ENCODE measurements at regions of chr1 and their contacts with region 1.

Region 1: DNA sequence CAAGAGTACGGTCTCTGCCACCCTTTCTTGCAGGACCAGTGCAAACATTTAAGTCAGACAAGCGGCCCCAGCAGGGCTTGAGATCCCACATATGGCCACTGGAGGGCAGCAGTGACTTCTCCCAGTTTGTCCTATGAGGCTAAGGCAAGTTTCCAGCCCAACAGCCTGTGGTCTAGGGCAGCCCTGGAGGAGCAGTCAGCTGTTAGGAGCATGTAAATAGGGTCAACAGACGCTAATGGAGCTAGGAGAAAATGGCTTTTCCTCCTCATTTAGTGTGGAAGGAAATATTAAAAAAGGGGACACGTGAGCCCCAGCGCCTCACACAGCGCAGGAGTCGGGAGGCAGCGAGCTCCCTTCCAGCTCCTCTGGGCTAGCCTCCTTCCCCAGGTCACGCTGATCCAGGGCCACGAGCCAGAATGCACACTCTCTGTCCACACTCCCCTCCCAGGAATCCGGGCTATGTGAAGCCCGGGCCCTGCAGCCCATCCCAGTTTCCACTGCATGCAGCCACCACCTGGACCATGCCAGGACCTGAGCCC is 95.6 kb downstream of the LAMC2 start:
- DNase-seq: peak; percentile 94

Region 2: GRCh38 chr1:182781841-182782586 is 499.6 kb before region 1 on chr1:
- intact Hi-C with region 1: no loop called
- DNase-seq: peak; percentile 83

Region 3: GRCh38 chr1:182962554-182963115 is 319.0 kb before region 1 on chr1:
- intact Hi-C with region 1: loop called (anchors 2 kb)
- DNase-seq: peak; percentile 83

Region 4: DNA sequence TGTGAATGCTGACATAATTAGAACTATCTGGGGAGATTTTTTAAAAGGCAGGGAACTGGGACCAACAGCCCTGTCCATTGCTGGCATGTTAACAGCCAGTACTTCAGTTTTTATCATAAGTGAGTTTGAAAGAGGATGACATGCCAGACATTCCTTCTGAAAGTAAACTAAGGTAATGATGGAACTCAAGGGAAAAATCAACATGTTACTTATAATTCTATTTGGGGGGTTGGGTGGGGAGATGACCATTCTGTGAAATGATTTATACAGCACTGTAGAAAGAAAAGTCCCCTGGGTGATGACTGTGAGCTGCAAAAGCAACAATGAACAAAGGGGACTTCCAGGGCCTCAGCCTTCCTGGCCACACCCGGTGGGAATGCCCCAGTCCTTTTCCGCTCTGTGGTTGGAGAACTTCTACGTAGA is 101.0 kb before region 1 on chr1:
- intact Hi-C with region 1: loop called (anchors 5 kb)
- DNase-seq: peak; percentile 80

Region 5: DNA sequence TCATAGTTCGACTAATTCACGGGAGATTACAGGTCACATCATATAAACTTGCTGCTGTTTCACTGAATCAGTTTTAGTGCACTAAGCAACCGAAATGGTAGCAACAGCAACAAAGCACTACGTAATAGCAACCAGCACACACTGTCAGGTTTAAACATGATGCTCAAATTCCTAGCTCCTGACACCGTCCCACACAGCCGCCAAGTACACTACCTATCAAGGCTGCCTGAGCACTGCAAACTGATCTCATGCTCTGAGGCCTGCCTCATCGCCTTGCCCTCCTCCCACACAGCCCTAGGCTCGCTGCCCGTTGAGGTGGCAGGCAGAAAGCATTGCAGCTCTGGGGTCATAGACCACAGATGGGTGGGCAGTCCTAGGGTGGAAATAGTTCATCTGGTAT is 83.2 kb before region 1 on chr1:
- intact Hi-C with region 1: no loop called
- DNase-seq: no peak

Region 6: DNA sequence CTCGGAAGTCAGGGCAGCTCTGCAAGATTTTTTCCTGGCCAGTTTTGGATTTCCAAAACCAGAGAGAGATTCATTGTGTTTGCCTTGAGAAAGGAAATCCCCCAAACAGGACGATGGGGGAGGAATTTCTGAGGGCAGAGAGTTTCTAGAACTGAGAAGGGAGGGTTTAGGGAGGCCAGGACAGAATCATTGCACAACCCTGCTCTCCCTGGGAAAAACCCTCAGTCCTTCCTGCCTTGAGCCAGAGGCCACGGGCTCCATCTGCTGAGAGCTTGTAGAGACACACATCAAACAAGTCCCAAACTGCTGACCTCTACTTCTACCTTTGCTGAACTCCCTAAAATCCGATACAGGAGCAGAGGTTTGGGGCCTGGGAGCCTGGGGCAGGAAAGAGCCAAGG is 36.8 kb after region 1 on chr1:
- intact Hi-C with region 1: loop called (anchors 1 kb)
- DNase-seq: peak; percentile 84

Region 7: DNA sequence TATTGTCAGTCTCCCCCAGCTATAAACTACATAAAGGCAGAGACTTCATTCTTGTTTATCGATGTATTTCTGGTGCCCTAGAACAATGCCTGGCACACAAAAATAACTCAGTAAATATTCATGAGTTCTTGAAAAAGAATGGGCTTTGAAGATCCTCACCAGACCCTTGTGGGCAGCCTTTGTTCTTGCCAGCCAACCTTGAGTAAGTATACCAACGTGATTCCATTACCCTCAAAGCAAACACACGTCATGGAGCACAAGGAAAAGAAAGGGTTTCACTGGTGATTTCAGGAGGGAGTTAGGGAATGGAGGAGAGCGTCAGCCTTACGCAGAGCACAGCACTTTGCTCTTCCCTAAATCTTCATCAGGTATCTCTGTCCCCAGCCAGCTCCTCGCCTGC is 107.1 kb after region 1 on chr1:
- intact Hi-C with region 1: no loop called
- DNase-seq: no peak

Region 8: DNA sequence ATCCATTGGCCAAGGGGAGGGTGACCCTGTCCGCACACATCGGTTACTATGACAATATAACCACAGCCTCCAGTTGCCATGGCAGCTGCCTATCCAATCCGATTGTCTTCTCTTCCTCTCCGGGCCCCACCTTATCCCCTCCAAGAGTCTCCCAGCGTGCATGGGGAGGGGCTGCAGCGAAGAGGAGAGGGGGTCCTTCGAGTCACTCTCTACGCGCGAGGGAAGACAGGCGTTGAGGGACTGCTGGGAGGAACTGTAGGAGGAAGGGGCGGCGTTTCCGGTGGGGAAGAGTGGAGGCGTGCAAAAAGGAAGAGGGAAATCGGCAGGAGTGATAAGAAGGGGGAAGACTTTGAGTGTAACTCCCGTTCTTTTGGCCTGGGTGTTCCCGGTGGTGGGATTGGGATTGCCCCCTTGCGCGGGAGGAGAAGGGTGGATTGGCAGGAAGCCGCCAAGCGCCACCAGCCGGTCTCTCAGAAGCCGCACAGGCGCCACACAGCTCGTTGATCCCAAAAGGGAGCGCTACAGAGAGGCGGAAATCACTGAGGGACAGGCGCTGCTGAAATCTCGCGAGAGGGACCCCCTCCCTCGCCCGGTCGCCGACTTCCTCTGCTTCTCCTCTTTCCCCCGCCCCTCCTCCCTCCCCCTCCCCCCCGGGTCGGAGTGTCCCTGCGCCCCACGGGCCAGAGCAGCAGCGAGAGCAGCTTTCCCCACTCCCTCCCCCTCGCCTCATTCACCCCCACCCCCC is 190.3 kb after region 1 on chr1:
- intact Hi-C with region 1: loop called (anchors 2 kb)
- DNase-seq: peak; percentile 98

Region 9: DNA sequence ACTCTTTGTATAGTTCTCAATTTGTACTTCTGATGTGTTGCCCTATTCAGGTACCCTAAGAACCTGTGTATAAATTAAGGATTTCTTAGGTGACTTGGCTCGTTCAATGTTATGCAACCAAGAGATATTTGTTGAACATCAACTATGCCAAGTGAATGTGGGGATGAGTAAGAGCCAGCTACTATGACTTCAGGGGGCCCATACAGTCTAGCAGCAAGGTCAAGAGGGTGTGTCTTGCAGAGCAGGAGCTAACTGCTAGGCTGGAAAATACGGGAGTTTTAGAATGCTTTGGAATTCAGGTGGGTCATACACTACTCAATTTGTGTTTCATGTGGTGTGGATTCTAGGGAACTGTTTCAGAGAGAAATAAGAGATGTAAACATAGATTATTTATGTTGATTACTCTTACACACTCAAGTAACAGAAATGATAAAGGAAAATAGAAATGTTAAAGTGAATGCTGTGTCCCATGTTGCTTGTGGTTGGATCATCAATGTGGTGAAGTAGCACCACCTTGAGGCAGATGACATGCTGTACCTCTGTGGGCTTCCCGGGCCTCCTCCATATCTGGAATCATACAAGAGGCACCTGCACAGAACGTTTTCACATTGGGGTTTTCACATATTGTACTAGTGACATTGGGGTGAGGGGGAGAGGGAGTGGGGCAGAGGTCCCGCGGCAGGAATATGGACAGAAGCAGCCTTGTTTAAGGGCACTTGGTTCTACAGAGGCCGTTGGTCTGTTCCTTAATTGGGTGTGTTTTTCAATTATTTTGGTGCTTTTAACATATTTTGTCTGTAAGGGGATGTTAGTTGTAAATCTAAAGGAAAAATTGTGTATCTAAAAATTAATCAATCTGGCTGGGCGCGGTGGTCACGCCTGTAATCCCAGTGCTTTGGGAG is 341.5 kb after region 1 on chr1:
- intact Hi-C with region 1: loop called (anchors 5 kb)
- DNase-seq: no peak

Measured in cardiac septum (tissue), 1 donor.